Activated CD8-positive, alpha-beta T cell treated with anti-CD3 and anti-CD28 coated beads, Interleukin-2, amount 10 ng/mL, durations not matched to agents 7 days and 5 days (primary cell): ENCODE measurements at regions of chr7 and their contacts with region 1.

Region 1: GRCh38 chr7:25862260-25863037 is 289.5 kb upstream of the NFE2L3 start:
- DNase-seq: peak; percentile 99
- ATAC-seq: peak; percentile 93
- H3K4me3 Mint-ChIP-seq: peak overlapping the region; percentile 74
- H3K27ac Mint-ChIP-seq: peak overlapping the region; percentile 79
- H3K4me1 Mint-ChIP-seq: peaks cover 47% of the 10 kb centered on the region
- H3K27me3 Mint-ChIP-seq: peaks cover 70% of the 10 kb centered on the region

Region 2: GRCh38 chr7:25851332-25852210 is 10.9 kb before region 1 on chr7:
- CTCF ChIA-PET with region 1: interaction called, 11 read pairs
- POLR2A ChIA-PET with region 1: no interaction called
- DNase-seq: peak; percentile 73
- ATAC-seq: peak; percentile 78
- H3K4me3 Mint-ChIP-seq: peak overlapping the region; percentile 55
- H3K27ac Mint-ChIP-seq: peak overlapping the region; percentile 58
- H3K4me1 Mint-ChIP-seq: peaks cover 19% of the 10 kb centered on the region
- H3K27me3 Mint-ChIP-seq: peaks cover 59% of the 10 kb centered on the region

Region 3: DNA sequence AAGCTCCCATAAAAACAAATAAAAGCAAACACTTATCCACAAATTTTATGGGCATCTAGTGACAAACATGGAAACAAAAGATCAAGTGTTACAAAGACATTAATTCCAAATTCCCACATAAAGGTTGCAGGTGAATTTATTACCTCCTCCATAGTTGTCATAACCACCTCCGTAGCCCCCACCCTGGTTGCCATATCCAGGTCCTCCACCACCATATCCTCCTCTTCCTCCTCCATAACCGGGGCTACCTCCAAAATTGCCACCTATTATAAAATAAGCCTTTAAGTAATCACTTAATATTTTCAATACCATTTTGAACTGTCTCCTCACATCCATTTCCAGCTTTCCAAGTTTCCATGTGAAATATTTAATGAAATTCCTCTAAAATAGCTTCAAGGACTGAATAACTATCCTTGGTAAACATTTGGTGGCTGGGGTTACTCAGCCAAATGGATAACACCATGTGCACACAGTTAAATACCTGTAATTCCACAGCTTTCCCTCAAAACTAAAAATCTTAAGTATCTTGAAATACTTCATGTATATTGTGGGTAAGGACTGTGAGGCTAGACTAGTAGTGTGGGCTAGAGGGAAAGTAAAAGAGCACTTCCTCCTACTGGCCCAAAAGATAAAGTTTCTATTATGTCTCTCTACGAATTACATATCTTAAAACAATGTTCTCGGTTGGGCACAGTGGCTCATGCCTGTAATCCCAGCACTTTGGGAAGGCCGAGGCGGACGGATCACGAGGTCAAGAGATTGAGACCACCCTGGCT is 331.2 kb after region 1 on chr7:
- CTCF ChIA-PET with region 1: no interaction called
- POLR2A ChIA-PET with region 1: no interaction called
- DNase-seq: no peak
- ATAC-seq: peak; percentile 6
- H3K4me3 Mint-ChIP-seq: peak overlapping the region; percentile 100
- H3K27ac Mint-ChIP-seq: peak overlapping the region; percentile 86
- H3K4me1 Mint-ChIP-seq: peaks cover 78% of the 10 kb centered on the region
- H3K27me3 Mint-ChIP-seq: no peaks in the 10 kb centered on the region